Dendritic cell treated with granulocyte-macrophage colony-stimulating factor and Interleukin-4, amounts not matched to agents 40 ng/mL and 50 ng/mL, for 4 days (primary cell): ENCODE measurements at regions of chr13 and their contacts with region 1.

Region 1: DNA sequence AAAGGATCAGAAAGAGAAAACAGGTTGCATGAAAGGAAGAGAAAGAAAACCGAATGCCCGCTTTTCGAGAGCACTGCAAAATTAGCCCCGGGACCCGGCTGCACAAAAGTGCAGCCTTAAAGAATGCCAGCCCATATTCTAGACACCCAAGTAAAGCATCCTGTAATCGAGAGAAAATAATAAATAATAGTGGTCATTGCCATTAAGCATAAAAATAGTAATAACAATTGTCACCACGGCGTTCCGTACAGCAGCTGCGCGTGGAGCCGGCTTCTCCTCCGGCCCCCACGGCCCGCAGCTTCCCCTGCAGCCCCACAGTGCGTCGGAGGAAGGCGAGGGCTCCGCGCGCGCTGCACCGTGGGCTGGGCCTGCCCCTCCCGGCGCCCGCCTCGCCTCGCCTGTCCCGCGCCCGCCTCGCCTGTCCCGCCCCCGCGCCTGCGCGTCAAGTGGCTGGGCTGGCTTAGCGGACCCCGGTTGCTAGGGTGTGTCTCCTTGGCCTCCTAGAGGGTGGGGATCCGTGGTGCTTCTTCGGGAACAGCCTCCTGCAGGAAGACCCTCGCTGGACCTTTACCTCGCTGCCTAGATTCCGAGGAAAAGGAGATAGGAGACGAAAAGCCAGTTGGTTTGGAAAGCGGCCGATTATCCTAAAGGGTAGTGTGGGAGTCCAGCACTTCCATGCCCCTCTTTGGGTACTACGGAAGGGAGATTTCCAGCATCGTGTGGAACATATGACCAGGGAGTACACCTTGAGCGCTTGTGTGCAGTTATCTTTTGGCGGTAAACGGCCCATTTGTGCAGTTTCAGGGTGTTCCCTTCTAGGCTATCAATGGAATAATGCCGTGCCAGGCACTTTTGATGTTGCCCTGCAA is at the start of gene LRRC63:
- H3K4me3 Mint-ChIP-seq: peak within 1 kb of the TSS; percentile 85
- H3K27ac Mint-ChIP-seq: peak within 1 kb of the TSS; percentile 90
- H3K4me1 Mint-ChIP-seq: peaks cover 40% of the 10 kb centered on the region
- H3K27me3 Mint-ChIP-seq: no peaks in the 10 kb centered on the region

Region 2: GRCh38 chr13:46176756-46177155 is 35.0 kb before region 1 on chr13:
- intact Hi-C with region 1: loop called (anchors 5 kb)
- H3K4me3 Mint-ChIP-seq: peak overlapping the region; percentile 68
- H3K27ac Mint-ChIP-seq: peak overlapping the region; percentile 86
- H3K4me1 Mint-ChIP-seq: peaks cover 74% of the 10 kb centered on the region
- H3K27me3 Mint-ChIP-seq: no peaks in the 10 kb centered on the region